GM10248 (cell line): ENCODE measurements at regions of chr11 and their contacts with region 1.

Region 1: DNA sequence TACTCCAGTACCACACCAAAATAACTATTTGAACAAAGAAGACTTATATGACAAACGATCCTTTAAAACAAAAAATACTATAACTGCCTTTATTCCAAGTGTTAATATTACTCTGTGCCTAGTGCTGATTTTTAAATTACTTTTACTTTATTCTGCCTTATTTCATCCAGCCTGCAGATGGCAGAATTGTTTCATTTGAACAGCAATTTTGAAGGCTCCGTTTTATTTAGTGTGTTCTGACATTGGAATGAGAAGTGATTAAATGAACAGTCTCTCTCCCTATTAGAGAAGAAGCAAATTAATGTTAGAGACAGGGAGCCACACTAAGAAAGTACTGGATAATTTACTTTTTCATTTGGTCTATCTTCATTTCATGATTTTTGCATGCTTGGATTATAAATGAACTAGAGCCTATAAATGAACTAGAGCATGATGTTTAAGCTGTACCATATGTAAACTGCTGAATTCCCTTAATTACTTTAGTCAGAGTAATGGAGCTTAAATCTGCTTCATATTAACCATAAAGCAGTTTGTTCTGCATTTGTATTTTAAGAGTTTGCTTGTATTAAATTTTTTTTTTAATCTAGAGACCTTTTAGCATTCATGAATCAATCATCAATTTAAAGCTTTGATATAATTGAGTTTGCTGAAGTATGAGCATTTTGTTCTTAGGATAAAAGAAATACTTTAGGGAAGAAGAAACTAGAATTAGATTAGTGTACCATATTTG is 9.8 kb downstream of the PDHX start:
- DNase-seq: no peak
- CTCF ChIP-seq: peak; percentile 58

Region 2: DNA sequence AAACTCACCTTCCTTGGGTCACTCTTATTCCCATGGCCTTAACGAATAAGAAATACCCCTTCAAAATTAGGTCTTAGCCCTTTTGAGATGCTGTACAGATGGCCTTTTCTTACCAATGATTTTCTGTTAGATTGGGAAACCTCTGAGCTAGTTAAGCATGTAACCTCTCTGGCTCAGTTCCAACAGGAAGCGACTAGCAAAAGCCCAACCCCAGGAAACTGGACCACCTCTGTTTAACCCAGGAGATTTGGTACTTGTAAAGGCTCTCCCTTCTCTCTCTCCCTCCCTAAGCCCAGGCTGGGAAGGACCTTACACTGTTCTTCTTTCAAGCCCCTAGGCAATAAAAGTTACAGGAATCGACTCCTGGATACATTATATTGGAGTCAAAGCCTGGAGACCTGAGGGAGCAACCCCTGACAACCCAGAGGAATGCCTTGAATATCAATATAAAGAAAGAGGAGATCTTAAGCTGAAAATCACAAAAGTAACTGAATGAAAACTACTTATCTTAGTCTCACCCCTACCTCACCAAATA is 21.8 kb before region 1 on chr11:
- CTCF ChIA-PET with region 1: no interaction called
- POLR2A ChIA-PET with region 1: no interaction called
- DNase-seq: no peak
- CTCF ChIP-seq: no peak

Region 3: GRCh38 chr11:34916015-34916842 is 10.0 kb before region 1 on chr11 and contains the starts of genes APIP and PDHX:
- CTCF ChIA-PET with region 1: interaction called, 12 read pairs
- POLR2A ChIA-PET with region 1: no interaction called
- DNase-seq: peak; percentile 99
- CTCF ChIP-seq: no peak

Region 4: GRCh38 chr11:34936945-34937629 is 10.8 kb after region 1 on chr11:
- CTCF ChIA-PET with region 1: interaction called, 11 read pairs
- POLR2A ChIA-PET with region 1: no interaction called
- DNase-seq: no peak
- CTCF ChIP-seq: no peak

Region 5: GRCh38 chr11:35237860-35238715 is 311.8 kb after region 1 on chr11:
- CTCF ChIA-PET with region 1: interaction called, 38 read pairs
- POLR2A ChIA-PET with region 1: no interaction called
- DNase-seq: peak; percentile 34
- CTCF ChIP-seq: peak; percentile 52